PC-9 (cell line): ENCODE measurements at regions of chr13 and their contacts with region 1.

Region 1: GRCh38 chr13:23579072-23579895 is 9.1 kb downstream of the TNFRSF19 start:
- DNase-seq: peak; percentile 39 to 83
- H3K4me3 ChIP-seq: peak overlapping the region; percentile 66
- H3K27ac ChIP-seq: no peak overlapping the region
- H3K4me1 ChIP-seq: no peaks in the 10 kb centered on the region
- H3K27me3 ChIP-seq: peaks cover 13% of the 10 kb centered on the region
- CTCF ChIP-seq: no peak

Region 2: GRCh38 chr13:23378009-23378632 is 201.2 kb before region 1 on chr13:
- CTCF ChIA-PET with region 1: no interaction called
- POLR2A ChIA-PET with region 1: no interaction called
- intact Hi-C with region 1: no loop called
- DNase-seq: no peak
- H3K4me3 ChIP-seq: no peak overlapping the region
- H3K27ac ChIP-seq: no peak overlapping the region
- H3K4me1 ChIP-seq: peaks cover 8% of the 10 kb centered on the region; the same call in 1 of the 2 replicates
- H3K27me3 ChIP-seq: no peaks in the 10 kb centered on the region; the same call in 1 of the 2 replicates
- CTCF ChIP-seq: no peak

Region 3: GRCh38 chr13:23871616-23872220 is 292.4 kb after region 1 on chr13:
- CTCF ChIA-PET with region 1: no interaction called
- POLR2A ChIA-PET with region 1: no interaction called
- intact Hi-C with region 1: loop called (anchors 10 kb)
- DNase-seq: no peak
- H3K4me3 ChIP-seq: no peak overlapping the region
- H3K27ac ChIP-seq: no peak overlapping the region
- H3K4me1 ChIP-seq: no peaks in the 10 kb centered on the region
- H3K27me3 ChIP-seq: no peaks in the 10 kb centered on the region
- CTCF ChIP-seq: peak; percentile 77

Region 4: DNA sequence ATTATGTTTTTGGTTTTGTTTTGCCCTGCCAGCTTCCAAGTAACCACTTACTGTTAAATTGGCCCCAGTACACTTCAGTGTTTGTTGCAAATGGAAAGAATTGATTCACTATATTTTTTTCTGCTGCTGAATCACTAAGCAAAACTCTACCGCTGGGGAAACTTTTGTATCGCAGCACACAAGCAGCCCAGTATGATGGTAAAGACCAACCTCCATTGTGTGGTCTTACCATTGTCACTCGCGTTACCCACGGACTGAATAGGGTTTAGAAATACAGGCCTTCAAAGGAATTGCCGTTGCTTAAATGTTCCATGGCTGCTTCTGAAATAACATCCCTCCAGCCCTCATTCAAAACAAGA is 589.1 kb after region 1 on chr13:
- CTCF ChIA-PET with region 1: no interaction called
- POLR2A ChIA-PET with region 1: no interaction called
- intact Hi-C with region 1: no loop called
- DNase-seq: no peak
- H3K4me3 ChIP-seq: no peak overlapping the region
- H3K27ac ChIP-seq: no peak overlapping the region
- H3K4me1 ChIP-seq: no peaks in the 10 kb centered on the region
- H3K27me3 ChIP-seq: no peaks in the 10 kb centered on the region
- CTCF ChIP-seq: no peak